Prostate gland (tissue), 2 donors: ENCODE measurements at regions of chr3 and their contacts with region 1.

Region 1: DNA sequence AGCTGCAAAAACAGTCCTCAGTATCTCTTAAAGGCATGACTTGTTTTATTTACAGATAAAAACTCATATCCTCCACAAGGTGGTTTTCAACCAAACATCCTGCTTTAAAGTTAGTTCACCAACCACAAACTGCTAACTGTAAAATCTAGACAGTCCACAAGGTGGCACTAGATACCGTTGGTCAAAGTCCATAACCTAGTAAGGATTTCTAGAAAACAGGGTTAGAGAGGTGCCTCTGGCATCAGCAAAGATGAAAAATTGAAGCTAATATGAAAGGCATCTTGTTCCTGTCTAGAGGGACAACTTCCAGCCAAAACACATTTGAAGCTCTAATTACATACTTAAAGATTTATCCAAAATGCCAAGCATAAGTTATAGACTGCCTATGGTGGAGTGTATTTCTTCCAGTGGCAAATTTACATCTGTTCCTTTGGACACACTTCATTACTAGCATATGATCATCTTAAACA is 56.0 kb downstream of the ZMAT3 start:
- DNase-seq: peak; percentile 60
- H3K4me3 ChIP-seq: no peak overlapping the region
- H3K27ac ChIP-seq: no peak overlapping the region
- H3K4me1 ChIP-seq: no peaks in the 10 kb centered on the region
- H3K27me3 ChIP-seq: no peaks in the 10 kb centered on the region
- CTCF ChIP-seq: peak; percentile 37 to 81 (median 72)
- POLR2A ChIP-seq: no peak

Region 2: DNA sequence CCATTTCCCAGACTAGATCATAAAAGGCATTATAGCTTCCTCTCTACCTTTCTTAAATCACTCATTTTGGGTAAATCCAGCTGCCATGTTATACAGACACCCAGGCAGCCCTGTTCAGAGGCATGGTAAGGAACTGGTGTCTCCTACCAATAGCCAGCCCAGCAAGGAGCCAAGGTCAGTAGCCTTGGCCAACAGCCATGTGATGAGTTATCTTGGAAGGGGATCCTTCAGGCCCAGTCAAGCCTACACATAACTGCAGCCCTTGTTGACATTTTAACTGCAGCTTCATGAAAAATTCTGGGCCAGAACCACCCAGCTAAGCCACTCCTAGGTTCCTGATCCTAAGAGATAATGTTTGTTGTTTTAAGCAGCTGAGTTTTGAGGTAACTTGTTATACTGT is 85.1 kb after region 1 on chr3:
- intact Hi-C with region 1: loop called (anchors 10 kb)
- DNase-seq: no peak
- H3K4me3 ChIP-seq: no peak overlapping the region
- H3K27ac ChIP-seq: no peak overlapping the region
- H3K4me1 ChIP-seq: no peaks in the 10 kb centered on the region
- H3K27me3 ChIP-seq: no peaks in the 10 kb centered on the region
- CTCF ChIP-seq: no peak
- POLR2A ChIP-seq: no peak

Region 3: DNA sequence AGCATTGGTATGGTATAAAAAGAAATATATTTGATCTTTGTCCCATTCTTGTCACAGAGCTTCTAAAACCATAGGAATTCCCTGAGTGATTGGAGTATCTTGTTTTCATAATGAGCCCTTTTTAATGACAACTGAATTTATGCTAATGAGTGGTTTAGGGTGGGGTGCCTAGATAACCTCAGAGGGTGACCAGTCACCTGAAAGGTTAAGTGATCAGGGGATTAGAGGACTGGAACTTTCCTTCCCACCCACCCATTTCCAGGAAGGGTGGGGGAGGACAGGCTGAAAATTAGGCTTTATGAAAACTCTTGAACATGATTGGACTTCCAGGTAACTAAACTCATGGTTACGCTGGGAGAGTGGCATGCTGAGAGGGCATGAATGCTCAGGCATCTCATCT is 340.4 kb after region 1 on chr3:
- intact Hi-C with region 1: no loop called
- DNase-seq: no peak
- H3K4me3 ChIP-seq: no peak overlapping the region
- H3K27ac ChIP-seq: no peak overlapping the region
- H3K4me1 ChIP-seq: no peaks in the 10 kb centered on the region
- H3K27me3 ChIP-seq: no peaks in the 10 kb centered on the region
- CTCF ChIP-seq: no peak
- POLR2A ChIP-seq: no peak